CD8-positive, alpha-beta T cell (primary cell): ENCODE measurements at regions of chr1 and their contacts with region 1.

Region 1: DNA sequence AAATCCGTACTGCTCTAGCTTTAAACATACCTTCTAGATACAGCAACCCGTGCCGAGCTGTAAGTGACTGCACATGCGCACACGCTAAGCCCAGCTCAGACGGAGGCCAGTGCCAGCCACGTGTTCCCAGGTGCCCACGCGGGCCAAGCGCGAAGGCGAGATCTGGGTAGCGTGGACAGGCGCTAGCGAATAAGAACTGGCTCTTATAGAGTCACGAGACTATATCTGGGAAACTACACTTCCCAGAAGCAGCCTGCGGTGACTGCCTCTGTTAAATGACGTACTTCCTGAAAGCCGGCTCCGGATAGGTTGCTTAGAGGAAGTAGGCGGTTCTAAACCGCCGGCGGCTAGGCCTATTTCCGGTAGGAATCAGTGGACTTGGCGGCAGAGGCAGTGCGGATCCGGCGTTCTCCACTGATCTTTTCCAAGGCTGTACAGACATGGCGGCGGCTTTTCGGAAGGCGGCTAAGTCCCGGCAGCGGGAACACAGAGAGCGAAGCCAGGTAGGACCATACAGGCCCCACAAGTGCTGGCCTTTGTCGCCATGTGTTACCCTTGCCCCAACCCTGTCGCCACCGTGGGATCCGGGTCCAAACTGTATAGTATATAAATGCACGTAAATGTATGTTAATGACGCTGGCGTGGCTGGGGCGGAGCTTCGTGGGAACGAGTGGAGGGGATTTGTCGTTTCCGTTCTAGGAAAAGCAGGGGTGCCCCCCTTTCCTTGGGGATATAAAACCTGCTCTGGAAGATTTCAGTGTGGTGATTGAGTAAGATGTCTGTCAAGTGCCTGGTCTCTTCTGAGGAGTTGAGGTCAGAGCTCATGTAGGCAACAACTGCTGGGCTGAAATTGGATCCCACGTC is at the start of gene UTP11:
- DNase-seq: peak; percentile 80 to 97 (median 88)
- ATAC-seq: peak; percentile 86
- H3K4me3 ChIP-seq: peak within 1 kb of the TSS; percentile 66 to 94
- H3K4me3 Mint-ChIP-seq: peak within 1 kb of the TSS; percentile 99
- H3K27ac ChIP-seq: peak within 1 kb of the TSS; percentile 74 to 94
- H3K27ac Mint-ChIP-seq: peak within 1 kb of the TSS; percentile 99
- H3K4me1 ChIP-seq: peaks cover 40% of the 10 kb centered on the region
- H3K4me1 Mint-ChIP-seq: peaks cover 57% of the 10 kb centered on the region
- H3K27me3 ChIP-seq: no peaks in the 10 kb centered on the region
- H3K27me3 Mint-ChIP-seq: no peaks in the 10 kb centered on the region
- CTCF ChIP-seq: no peak
- total RNA-seq, gene UTP11: 12.8 to 14.0 TPM

Region 2: GRCh38 chr1:37595440-37596319 is 416.9 kb before region 1 on chr1 and contains the start of gene GNL2:
- CTCF ChIA-PET with region 1: no interaction called
- POLR2A ChIA-PET with region 1: no interaction called
- intact Hi-C with region 1: loop called (anchors 10 kb)
- DNase-seq: peak; percentile 92 to 99 (median 96)
- ATAC-seq: peak; percentile 95
- H3K4me3 ChIP-seq: peak within 1 kb of the TSS; percentile 67 to 88
- H3K4me3 Mint-ChIP-seq: peak within 1 kb of the TSS; percentile 100
- H3K27ac ChIP-seq: peak within 1 kb of the TSS; percentile 68 to 93
- H3K27ac Mint-ChIP-seq: peak within 1 kb of the TSS; percentile 99
- H3K4me1 ChIP-seq: peaks cover 23% of the 10 kb centered on the region
- H3K4me1 Mint-ChIP-seq: peaks cover 36% of the 10 kb centered on the region
- H3K27me3 ChIP-seq: no peaks in the 10 kb centered on the region
- H3K27me3 Mint-ChIP-seq: no peaks in the 10 kb centered on the region
- CTCF ChIP-seq: no peak
- total RNA-seq, gene GNL2: 54.6 to 55.2 TPM

Region 3: DNA sequence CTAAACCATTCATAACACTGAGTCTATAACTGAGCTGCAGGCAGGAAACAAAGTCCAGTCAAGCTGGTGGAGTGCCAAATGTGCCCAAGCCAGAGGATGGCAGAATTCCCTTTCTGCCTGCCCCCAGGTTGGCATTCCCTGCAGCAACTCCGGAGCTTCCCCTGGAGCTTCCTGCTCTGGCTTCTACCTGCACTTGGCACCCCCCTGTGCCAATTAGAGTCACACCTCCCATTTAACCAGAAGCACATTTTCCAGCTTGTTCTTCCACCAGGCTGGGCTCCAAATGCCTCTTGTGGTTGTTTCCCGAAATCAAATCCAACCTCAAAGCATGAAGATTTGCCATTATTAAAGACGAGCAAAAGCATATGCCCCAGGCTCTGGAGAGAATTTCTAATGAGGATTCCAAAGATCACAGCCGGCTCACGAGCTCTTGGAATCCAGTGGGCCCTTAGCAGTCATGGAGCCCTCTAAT is 552.5 kb after region 1 on chr1:
- CTCF ChIA-PET with region 1: no interaction called
- POLR2A ChIA-PET with region 1: no interaction called
- intact Hi-C with region 1: loop called in 1 of 2 experiments (anchors 10 kb)
- DNase-seq: no peak
- ATAC-seq: no peak
- H3K4me3 ChIP-seq: no peak overlapping the region
- H3K4me3 Mint-ChIP-seq: no peak overlapping the region
- H3K27ac ChIP-seq: no peak overlapping the region
- H3K27ac Mint-ChIP-seq: no peak overlapping the region
- H3K4me1 ChIP-seq: peaks cover 37% of the 10 kb centered on the region
- H3K4me1 Mint-ChIP-seq: peaks cover 40% of the 10 kb centered on the region
- H3K27me3 ChIP-seq: peaks cover 0 to 8% of the 10 kb centered on the region in 2 experiments
- H3K27me3 Mint-ChIP-seq: peaks cover 49% of the 10 kb centered on the region
- CTCF ChIP-seq: no peak